MCF 10A (cell line): ENCODE measurements at regions of chr15 and their contacts with region 1.

Region 1: DNA sequence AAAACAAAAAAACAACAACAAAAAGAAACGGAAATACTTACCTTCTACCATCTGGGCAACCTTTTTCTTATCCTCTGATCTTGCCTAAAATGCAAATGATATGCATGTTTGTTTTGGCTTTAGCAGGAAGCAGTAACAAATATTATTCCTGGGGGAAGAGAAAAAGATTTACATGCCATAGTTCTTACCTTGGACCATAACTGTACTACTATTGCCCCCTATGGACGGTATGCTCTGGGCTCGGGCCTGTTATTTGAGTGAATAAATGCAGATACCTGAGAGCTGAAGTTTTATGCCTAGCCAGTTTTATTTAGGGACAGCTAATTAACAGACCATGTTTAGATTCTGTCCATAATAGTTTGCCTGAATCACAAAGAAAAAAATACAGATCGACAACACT is 12.6 kb upstream of the STARD5 start:
- DNase-seq: peak; percentile 57
- H3K4me3 Mint-ChIP-seq: no peak overlapping the region
- H3K27ac Mint-ChIP-seq: no peak overlapping the region
- H3K4me1 Mint-ChIP-seq: peaks cover 24% of the 10 kb centered on the region
- H3K27me3 Mint-ChIP-seq: no peaks in the 10 kb centered on the region
- CTCF ChIP-seq: peak; percentile 14

Region 2: GRCh38 chr15:81225161-81225671 is 111.4 kb before region 1 on chr15:
- CTCF ChIA-PET with region 1: no interaction called
- POLR2A ChIA-PET with region 1: no interaction called
- intact Hi-C with region 1: no loop called
- DNase-seq: no peak
- H3K4me3 Mint-ChIP-seq: no peak overlapping the region
- H3K27ac Mint-ChIP-seq: no peak overlapping the region
- H3K4me1 Mint-ChIP-seq: peaks cover 5% of the 10 kb centered on the region
- H3K27me3 Mint-ChIP-seq: no peaks in the 10 kb centered on the region
- CTCF ChIP-seq: no peak

Region 3: DNA sequence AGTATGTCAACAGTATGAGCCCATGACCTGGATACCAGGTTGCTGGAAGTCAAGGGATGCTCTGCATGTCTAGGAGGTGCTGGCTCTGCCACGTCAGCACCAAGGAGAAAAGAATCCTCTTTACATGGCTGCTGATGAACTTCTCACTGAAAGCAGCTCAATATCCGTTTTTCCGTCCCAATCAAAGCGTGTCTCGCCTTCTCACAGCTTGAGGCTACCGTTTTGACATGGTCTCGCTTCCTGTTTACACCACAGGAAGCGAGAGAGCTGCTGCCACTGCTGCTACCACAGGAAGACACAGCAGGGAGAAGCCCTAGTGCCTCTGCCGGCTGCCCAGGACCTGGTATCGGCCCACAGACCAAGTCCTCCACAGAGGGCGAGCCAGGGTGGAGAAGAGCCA is 39.9 kb before region 1 on chr15:
- CTCF ChIA-PET with region 1: interaction called, 3 read pairs
- POLR2A ChIA-PET with region 1: interaction called, 4 read pairs
- intact Hi-C with region 1: loop called (anchors 1 kb)
- DNase-seq: peak; percentile 48
- H3K4me3 Mint-ChIP-seq: no peak overlapping the region
- H3K27ac Mint-ChIP-seq: no peak overlapping the region
- H3K4me1 Mint-ChIP-seq: peaks cover 22% of the 10 kb centered on the region
- H3K27me3 Mint-ChIP-seq: no peaks in the 10 kb centered on the region
- CTCF ChIP-seq: no peak

Region 4: DNA sequence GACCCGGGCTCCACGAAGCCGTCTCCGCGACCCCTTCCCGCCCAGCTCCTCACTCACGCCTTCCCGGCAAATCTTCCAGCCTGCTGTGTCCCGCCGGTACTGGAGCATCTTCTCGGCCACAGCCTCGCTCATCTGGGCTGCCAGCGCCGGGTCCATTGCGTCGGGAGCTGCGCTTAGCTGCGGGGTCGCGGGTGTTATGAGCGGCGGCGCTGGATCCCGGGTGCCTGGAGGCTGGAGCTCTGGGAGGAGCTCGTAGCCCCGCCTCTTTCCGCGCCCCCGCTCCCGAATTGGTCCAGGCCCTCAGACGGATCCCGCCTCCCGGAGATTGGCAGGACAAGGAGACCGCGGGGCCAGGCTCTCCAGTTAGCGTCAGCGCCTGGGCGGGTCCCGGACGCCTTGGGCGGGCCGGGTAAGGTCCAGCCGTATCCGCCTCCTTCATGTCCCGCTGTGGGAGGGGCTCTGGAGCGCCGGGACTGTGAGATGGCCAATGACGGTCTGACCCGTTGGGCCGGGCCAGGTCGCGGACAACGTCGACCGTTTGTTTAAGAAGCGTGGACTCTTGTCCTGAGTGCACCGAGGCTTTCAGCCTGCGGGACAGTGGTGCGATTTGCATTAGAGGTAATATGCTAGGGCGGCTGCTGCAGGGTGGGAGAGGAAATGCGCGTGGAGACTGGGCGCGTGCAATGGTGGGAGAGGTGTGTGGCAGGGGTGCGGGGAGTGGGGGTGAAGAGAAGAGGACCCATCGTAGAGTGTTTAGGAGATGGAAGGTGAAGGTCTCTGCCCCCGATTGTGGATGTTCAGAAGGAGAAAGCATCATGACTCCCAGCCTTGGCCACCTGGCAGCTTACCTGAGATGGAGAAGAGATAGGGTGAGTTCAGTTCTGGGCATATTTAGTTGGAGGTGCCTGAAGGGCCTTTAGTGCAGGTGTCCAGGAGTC is 12.4 kb before region 1 on chr15 and contains the start of gene STARD5:
- CTCF ChIA-PET with region 1: interaction called, 5 read pairs
- POLR2A ChIA-PET with region 1: interaction called, 11 read pairs
- intact Hi-C with region 1: no loop called
- DNase-seq: peak; percentile 97
- H3K4me3 Mint-ChIP-seq: peak within 1 kb of the TSS; percentile 80
- H3K27ac Mint-ChIP-seq: peak within 1 kb of the TSS; percentile 32
- H3K4me1 Mint-ChIP-seq: peaks cover 26% of the 10 kb centered on the region
- H3K27me3 Mint-ChIP-seq: no peaks in the 10 kb centered on the region
- CTCF ChIP-seq: no peak
- total RNA-seq, gene STARD5: 2.0 and 3.4 TPM in 2 replicates

Region 5: GRCh38 chr15:81449836-81450495 is 113.4 kb after region 1 on chr15:
- CTCF ChIA-PET with region 1: no interaction called
- POLR2A ChIA-PET with region 1: no interaction called
- intact Hi-C with region 1: no loop called
- DNase-seq: no peak
- H3K4me3 Mint-ChIP-seq: no peak overlapping the region
- H3K27ac Mint-ChIP-seq: no peak overlapping the region
- H3K4me1 Mint-ChIP-seq: peaks cover 6% of the 10 kb centered on the region
- H3K27me3 Mint-ChIP-seq: no peaks in the 10 kb centered on the region
- CTCF ChIP-seq: no peak